ENCODE measurements at regions of chr7 and their contacts with region 1.

Region 1: GRCh38 chr7:96303686-96304443 is 18.0 kb downstream of the SLC25A13 start:
- DNase-seq: no peak
- H3K4me3 Mint-ChIP-seq: peak overlapping the region; percentile 37
- H3K27ac Mint-ChIP-seq: peak overlapping the region; percentile 92
- H3K4me1 Mint-ChIP-seq: peaks cover 66% of the 10 kb centered on the region
- H3K27me3 Mint-ChIP-seq: no peaks in the 10 kb centered on the region

Region 2: GRCh38 chr7:96285579-96285978 is 18.3 kb before region 1 on chr7:
- intact Hi-C with region 1: loop called (anchors 1 kb)
- DNase-seq: peak; percentile 41
- H3K4me3 Mint-ChIP-seq: peak overlapping the region; percentile 62
- H3K27ac Mint-ChIP-seq: peak overlapping the region; percentile 90
- H3K4me1 Mint-ChIP-seq: peaks cover 51% of the 10 kb centered on the region
- H3K27me3 Mint-ChIP-seq: no peaks in the 10 kb centered on the region

Region 3: DNA sequence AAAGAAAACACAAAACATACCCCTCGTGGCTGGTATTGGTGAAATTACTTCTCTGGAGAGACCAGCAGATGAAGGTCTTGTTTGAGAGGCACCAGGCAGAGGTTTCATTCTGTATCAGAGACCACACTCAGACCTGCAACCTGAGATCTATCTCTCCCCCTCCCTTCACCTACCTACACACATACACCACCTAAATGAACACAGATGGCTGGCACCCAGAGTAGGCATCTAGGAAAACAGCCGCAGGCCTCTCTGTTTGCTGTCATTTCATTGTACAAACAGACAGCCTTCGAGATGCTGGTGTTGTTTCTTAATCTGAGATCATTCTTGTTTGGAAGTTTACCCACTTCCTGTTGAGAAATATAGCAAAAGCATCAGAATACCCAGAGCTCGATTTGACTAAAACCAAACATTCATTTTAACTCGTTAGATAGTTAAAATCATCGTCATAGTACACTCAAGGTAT is 191.9 kb after region 1 on chr7:
- intact Hi-C with region 1: loop called (anchors 1 kb)
- DNase-seq: peak; percentile 20
- H3K4me3 Mint-ChIP-seq: peak overlapping the region; percentile 62
- H3K27ac Mint-ChIP-seq: peak overlapping the region; percentile 92
- H3K4me1 Mint-ChIP-seq: peaks cover 27% of the 10 kb centered on the region
- H3K27me3 Mint-ChIP-seq: peaks cover 9% of the 10 kb centered on the region